Activated CD4-positive, alpha-beta T cell treated with anti-CD3 and anti-CD28 coated beads, Interleukin-2, amount 10 ng/mL, durations not matched to agents 7 days and 5 days (primary cell): ENCODE measurements at regions of chr1 and their contacts with region 1.

Region 1: GRCh38 chr1:155208541-155209311 is at the start of gene MTX1:
- DNase-seq: peak; percentile 90
- H3K4me3 Mint-ChIP-seq: peak within 1 kb of the TSS; percentile 82
- H3K27ac Mint-ChIP-seq: peak within 1 kb of the TSS; percentile 91
- H3K4me1 Mint-ChIP-seq: peaks cover 31% of the 10 kb centered on the region
- H3K27me3 Mint-ChIP-seq: no peaks in the 10 kb centered on the region
- total RNA-seq, gene MTX1: 32.8 to 37.3 TPM

Region 2: DNA sequence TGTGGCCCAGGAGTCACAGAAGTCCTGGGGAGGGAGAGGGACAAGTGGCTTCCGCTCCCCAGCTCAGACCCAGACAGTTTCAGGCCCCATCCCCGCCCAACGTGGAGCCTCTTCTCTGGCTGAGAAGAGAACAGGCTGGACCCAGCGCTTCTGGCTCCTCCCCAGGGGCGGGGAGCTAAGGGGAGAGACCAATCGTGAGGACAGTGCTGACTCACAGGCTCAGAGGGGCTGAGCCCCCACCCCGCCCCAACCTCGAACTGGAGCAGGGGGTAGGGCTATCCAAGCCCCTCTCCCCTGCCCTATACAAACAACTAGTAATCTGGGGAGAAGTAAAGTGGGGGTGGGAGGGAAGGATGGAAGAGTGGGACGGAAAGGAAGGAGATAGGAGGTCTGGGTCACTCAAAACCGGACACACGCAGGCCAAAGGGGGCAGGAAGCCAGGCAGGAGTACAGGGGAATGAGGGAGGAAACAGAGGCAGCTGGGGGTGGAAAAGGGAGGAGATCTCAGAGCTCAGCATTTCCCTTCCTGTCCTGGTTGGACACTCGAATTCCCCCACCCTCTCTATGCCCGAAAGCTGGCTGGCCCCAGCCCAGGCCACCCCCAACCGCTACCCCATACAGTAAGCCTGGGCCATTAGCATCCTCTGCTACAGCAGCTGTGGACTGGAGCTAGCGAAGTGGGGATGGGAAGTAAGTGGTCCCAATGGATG is 237.9 kb before region 1 on chr1 and contains the start of gene SHC1:
- CTCF ChIA-PET with region 1: no interaction called
- POLR2A ChIA-PET with region 1: no interaction called
- DNase-seq: peak; percentile 39
- H3K4me3 Mint-ChIP-seq: peak within 1 kb of the TSS; percentile 25
- H3K27ac Mint-ChIP-seq: peak within 1 kb of the TSS; percentile 72
- H3K4me1 Mint-ChIP-seq: peaks cover 51% of the 10 kb centered on the region
- H3K27me3 Mint-ChIP-seq: no peaks in the 10 kb centered on the region
- total RNA-seq, gene SHC1: 75.1 to 104 TPM

Region 3: DNA sequence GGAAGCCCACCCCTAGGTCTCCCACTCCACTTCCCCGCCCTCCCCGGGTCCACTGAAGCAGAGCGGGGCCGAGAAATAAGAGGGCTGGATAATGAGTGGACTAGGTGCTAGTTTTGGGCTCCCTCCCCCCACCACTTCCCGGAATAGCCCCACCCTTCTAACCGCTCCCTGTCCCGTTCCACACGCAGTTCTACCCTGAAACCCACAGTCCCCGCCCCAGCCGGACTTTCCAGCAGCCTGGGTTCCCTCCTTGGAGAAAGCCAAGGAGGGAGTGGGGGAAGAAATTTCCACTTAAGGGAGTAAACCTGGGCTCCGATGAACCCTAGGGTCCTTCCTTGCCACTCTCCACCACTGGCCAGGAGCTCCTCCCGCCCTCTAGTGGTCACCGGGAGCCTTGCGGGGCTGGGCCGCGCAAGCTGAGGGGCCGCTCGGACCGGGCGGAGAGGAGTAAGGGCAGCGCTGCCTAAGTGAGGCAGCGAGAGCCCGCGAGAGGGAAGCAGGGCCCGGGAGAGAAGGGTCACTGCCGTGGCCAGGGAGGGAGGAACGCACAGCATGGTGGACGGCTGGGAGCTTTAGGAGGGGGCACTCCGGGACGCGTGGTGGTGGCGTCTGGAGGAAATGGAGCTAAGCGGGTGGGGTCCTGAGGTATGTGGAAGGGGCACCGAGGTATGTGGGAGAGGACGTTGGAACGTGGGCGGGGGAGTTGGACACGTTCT is 15.3 kb before region 1 on chr1:
- CTCF ChIA-PET with region 1: interaction called, 27 read pairs
- POLR2A ChIA-PET with region 1: no interaction called
- DNase-seq: peak; percentile 77
- H3K4me3 Mint-ChIP-seq: peak overlapping the region; percentile 74
- H3K27ac Mint-ChIP-seq: peak overlapping the region; percentile 96
- H3K4me1 Mint-ChIP-seq: peaks cover 38% of the 10 kb centered on the region
- H3K27me3 Mint-ChIP-seq: no peaks in the 10 kb centered on the region

Region 4: GRCh38 chr1:155227261-155228095 is 18.8 kb after region 1 on chr1:
- CTCF ChIA-PET with region 1: interaction called, 12 read pairs
- POLR2A ChIA-PET with region 1: interaction called, 3 read pairs
- DNase-seq: peak; percentile 99
- H3K4me3 Mint-ChIP-seq: peak overlapping the region; percentile 84
- H3K27ac Mint-ChIP-seq: peak overlapping the region; percentile 92
- H3K4me1 Mint-ChIP-seq: peaks cover 36% of the 10 kb centered on the region
- H3K27me3 Mint-ChIP-seq: no peaks in the 10 kb centered on the region